MCF 10A (cell line): ENCODE measurements at regions of chr3 and their contacts with region 1.

Region 1: GRCh38 chr3:190120269-190121060 is at the start of gene P3H2:
- DNase-seq: peak; percentile 91
- H3K4me3 Mint-ChIP-seq: peak within 1 kb of the TSS; percentile 95
- H3K27ac Mint-ChIP-seq: peak within 1 kb of the TSS; percentile 70
- H3K4me1 Mint-ChIP-seq: peaks cover 51% of the 10 kb centered on the region
- H3K27me3 Mint-ChIP-seq: no peaks in the 10 kb centered on the region
- CTCF ChIP-seq: peak; percentile 32
- total RNA-seq, gene P3H2: 19.8 and 60.2 TPM in 2 replicates

Region 2: GRCh38 chr3:189961525-189962161 is 158.8 kb before region 1 on chr3:
- CTCF ChIA-PET with region 1: interaction called, 20 read pairs
- POLR2A ChIA-PET with region 1: interaction called, 11 read pairs
- intact Hi-C with region 1: no loop called
- DNase-seq: peak; percentile 88
- H3K4me3 Mint-ChIP-seq: no peak overlapping the region
- H3K27ac Mint-ChIP-seq: no peak overlapping the region
- H3K4me1 Mint-ChIP-seq: peaks cover 7% of the 10 kb centered on the region
- H3K27me3 Mint-ChIP-seq: no peaks in the 10 kb centered on the region
- CTCF ChIP-seq: peak; percentile 91

Region 3: GRCh38 chr3:190017521-190018288 is 102.8 kb before region 1 on chr3:
- CTCF ChIA-PET with region 1: interaction called, 11 read pairs
- POLR2A ChIA-PET with region 1: interaction called, 22 read pairs
- intact Hi-C with region 1: loop called (anchors 1 kb)
- DNase-seq: peak; percentile 78
- H3K4me3 Mint-ChIP-seq: no peak overlapping the region
- H3K27ac Mint-ChIP-seq: no peak overlapping the region
- H3K4me1 Mint-ChIP-seq: peaks cover 26% of the 10 kb centered on the region
- H3K27me3 Mint-ChIP-seq: no peaks in the 10 kb centered on the region
- CTCF ChIP-seq: peak; percentile 74

Region 4: DNA sequence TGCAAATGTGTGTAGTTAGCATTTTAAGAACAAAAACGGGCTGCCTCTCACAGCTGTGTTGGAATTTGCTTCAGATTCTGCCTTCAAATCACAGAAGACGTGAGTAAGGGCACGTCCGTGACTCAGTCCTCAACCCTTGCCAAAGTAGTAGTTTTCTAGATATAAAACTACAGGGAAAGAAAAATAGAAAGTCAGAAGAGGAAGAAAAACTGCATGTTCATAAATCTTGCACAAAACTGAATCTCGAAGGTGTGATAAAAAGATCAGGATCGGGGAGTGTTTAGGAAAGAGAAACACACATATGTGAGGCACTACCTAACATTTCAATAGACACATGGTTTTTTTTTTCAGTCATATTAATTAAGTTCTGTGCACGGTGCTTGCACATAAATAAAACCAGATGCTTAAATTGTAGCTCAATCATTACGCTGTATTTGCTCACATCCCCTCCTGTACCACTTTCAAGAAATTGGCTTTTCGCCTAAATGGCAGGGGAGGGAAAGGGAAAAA is 71.5 kb before region 1 on chr3:
- CTCF ChIA-PET with region 1: interaction called, 20 read pairs
- POLR2A ChIA-PET with region 1: interaction called, 47 read pairs
- intact Hi-C with region 1: no loop called
- DNase-seq: peak; percentile 49
- H3K4me3 Mint-ChIP-seq: peak overlapping the region; percentile 67
- H3K27ac Mint-ChIP-seq: peak overlapping the region; percentile 77
- H3K4me1 Mint-ChIP-seq: peaks cover 32% of the 10 kb centered on the region
- H3K27me3 Mint-ChIP-seq: no peaks in the 10 kb centered on the region
- CTCF ChIP-seq: no peak

Region 5: GRCh38 chr3:190101320-190102011 is 19.0 kb before region 1 on chr3:
- CTCF ChIA-PET with region 1: interaction called, 5 read pairs
- POLR2A ChIA-PET with region 1: interaction called, 44 read pairs
- intact Hi-C with region 1: no loop called
- DNase-seq: peak; percentile 18
- H3K4me3 Mint-ChIP-seq: peak overlapping the region; percentile 70
- H3K27ac Mint-ChIP-seq: peak overlapping the region; percentile 97
- H3K4me1 Mint-ChIP-seq: peaks cover 39% of the 10 kb centered on the region
- H3K27me3 Mint-ChIP-seq: no peaks in the 10 kb centered on the region
- CTCF ChIP-seq: no peak

Region 6: GRCh38 chr3:190155752-190156151 is 35.3 kb after region 1 on chr3:
- CTCF ChIA-PET with region 1: interaction called, 4 read pairs
- POLR2A ChIA-PET with region 1: interaction called, 36 read pairs
- intact Hi-C with region 1: no loop called
- DNase-seq: peak; percentile 79
- H3K4me3 Mint-ChIP-seq: peak overlapping the region; percentile 10
- H3K27ac Mint-ChIP-seq: peak overlapping the region; percentile 89
- H3K4me1 Mint-ChIP-seq: peaks cover 18% of the 10 kb centered on the region
- H3K27me3 Mint-ChIP-seq: no peaks in the 10 kb centered on the region
- CTCF ChIP-seq: no peak